Lower leg skin (tissue), 4 donors: ENCODE measurements at regions of chr11 and their contacts with region 1.

Region 1: DNA sequence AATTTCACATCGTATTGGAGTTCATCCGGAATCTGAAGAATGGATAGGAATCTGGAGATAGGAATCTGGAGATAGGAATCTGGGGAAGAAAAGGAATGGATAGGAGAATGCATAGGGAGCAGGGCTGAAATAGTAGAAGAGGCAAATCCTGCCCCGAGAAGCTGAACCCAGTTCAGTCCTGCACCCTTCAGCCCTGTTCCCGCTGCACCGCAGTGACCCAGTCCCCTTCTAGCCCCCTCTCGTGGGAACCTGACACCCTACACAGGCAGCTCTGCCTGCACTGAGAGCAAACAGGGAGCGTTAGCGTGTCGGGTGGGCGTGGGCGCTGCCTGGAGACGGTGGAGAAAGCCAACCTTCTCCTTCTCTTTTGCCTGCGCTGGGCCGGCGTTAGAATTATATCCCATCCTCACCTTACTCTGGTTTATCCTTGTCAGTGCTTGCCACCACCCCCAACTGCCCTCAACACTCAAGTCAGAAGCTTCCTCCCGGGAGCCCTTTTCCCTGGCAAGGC is 1.0 kb upstream of the CCKBR start:
- DNase-seq: no peak
- H3K4me3 ChIP-seq: no peak overlapping the region
- CTCF ChIP-seq: no peak
- POLR2A ChIP-seq: no peak

Region 2: DNA sequence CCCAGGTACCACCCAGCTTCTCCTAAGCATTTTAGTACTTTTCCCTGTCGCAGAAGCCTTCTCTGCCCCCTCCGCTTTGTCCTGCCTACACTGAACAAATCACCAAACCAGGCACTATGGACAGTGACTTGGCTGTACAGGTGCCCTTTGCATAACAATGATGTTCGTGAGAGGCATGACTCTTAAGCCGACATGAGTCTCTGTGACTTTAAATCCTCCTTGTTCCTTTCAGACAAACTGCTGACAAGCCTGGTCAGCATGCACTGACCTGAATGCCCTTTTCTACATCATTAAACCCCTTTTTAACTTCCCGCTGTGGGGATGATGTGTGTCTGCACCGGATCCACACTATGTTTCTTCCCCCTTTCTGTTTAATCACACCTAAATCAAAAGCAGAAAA is 45.0 kb after region 1 on chr11:
- intact Hi-C with region 1: loop called (anchors 1 kb)
- DNase-seq: no peak
- H3K4me3 ChIP-seq: no peak overlapping the region
- CTCF ChIP-seq: no peak
- POLR2A ChIP-seq: no peak